Breast epithelium (tissue), 4 donors: ENCODE measurements at regions of chr19 and their contacts with region 1.

Region 1: GRCh38 chr19:6260912-6261650 is 18.7 kb downstream of the MLLT1 start:
- DNase-seq: no peak
- H3K4me3 ChIP-seq: no peak overlapping the region
- H3K27ac ChIP-seq: no peak overlapping the region
- H3K4me1 ChIP-seq: no peaks in the 10 kb centered on the region
- H3K27me3 ChIP-seq: no peaks in the 10 kb centered on the region
- CTCF ChIP-seq: peak in 1 of 3 donors; percentile 19
- POLR2A ChIP-seq: no peak

Region 2: GRCh38 chr19:5196832-5197231 is 1064.2 kb before region 1 on chr19:
- intact Hi-C with region 1: loop called (anchors 5 kb)
- DNase-seq: no peak
- H3K4me3 ChIP-seq: no peak overlapping the region
- H3K27ac ChIP-seq: no peak overlapping the region
- H3K4me1 ChIP-seq: no peaks in the 10 kb centered on the region
- H3K27me3 ChIP-seq: no peaks in the 10 kb centered on the region
- CTCF ChIP-seq: no peak
- POLR2A ChIP-seq: no peak

Region 3: GRCh38 chr19:6220418-6221221 is 40.5 kb before region 1 on chr19:
- intact Hi-C with region 1: no loop called
- DNase-seq: peak in 1 of 2 donors; percentile 72
- H3K4me3 ChIP-seq: peak overlapping the region in 1 of 3 donors; percentile 26
- H3K27ac ChIP-seq: peak overlapping the region; percentile 75 to 78
- H3K4me1 ChIP-seq: peaks cover 3 to 14% of the 10 kb centered on the region in 2 donors
- H3K27me3 ChIP-seq: no peaks in the 10 kb centered on the region
- CTCF ChIP-seq: no peak
- POLR2A ChIP-seq: no peak

Region 4: GRCh38 chr19:8005534-8006256 is 1744.6 kb after region 1 on chr19 and contains the start of gene ELAVL1:
- intact Hi-C with region 1: no loop called
- DNase-seq: peak; percentile 84 to 88
- H3K4me3 ChIP-seq: peak within 1 kb of the TSS; percentile 82 to 98 (median 86)
- H3K27ac ChIP-seq: peak within 1 kb of the TSS; percentile 79 to 92
- H3K4me1 ChIP-seq: peaks cover 14 to 33% of the 10 kb centered on the region in 2 donors
- H3K27me3 ChIP-seq: no peaks in the 10 kb centered on the region
- CTCF ChIP-seq: no peak
- POLR2A ChIP-seq: no peak
- total RNA-seq, gene ELAVL1: 28.6 to 30.8 (median 29.7) TPM